ENCODE measurements at regions of chr11 and their contacts with region 1.

Region 1: DNA sequence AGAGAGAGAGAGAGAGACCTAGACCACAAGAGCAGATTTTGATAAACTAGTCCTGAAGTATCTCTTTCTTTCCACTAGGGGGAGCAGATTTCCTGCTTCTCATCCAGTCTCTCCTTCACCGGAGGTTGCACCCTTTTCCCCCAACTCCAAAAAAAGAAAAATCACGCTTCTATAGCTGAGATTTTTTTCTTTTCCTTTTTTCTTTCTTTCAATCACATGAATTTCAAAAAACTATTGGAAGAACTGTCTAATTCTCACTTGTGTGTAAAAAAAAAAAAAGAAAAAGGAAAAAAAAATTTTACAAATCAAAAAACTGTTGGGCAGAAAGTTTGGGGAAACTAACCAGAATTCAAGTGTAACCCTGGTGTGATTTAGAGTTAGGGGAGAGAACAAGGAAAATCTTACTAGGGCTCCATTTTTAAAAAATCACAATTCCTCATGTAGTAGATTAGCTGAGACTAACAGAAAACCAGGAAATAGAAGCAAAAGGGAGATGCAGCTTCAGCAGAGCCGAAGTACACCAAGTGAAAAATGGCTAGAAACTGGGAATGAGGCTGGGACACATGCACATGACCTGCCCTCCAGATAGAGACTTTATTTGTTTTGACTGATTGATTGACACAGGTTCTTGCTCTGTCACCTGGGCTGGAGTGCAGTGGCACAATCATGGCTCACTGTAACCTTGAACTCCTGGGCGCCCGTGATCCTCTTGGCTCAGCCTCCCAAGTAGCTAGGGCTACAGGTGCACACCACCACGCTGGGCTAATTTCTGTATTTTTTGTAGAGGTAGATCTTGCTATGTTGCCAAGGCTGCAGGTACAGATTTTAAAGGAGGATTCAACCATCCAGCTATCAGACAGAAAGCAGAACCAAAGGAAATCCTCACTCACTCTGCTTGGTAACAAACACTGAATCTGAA is 27.1 kb downstream of the SDHD start:
- DNase-seq: peak in 4 of 5 donors; percentile 33 to 56 (median 46)
- H3K4me3 ChIP-seq: no peak overlapping the region
- H3K4me3 Mint-ChIP-seq: no peak overlapping the region
- H3K27ac ChIP-seq: no peak overlapping the region
- H3K27ac Mint-ChIP-seq: peak overlapping the region in 2 of 7 donors; percentile 17 to 57
- H3K4me1 ChIP-seq: no peaks in the 10 kb centered on the region
- H3K4me1 Mint-ChIP-seq: peaks cover 0 to 2% (median 0%) of the 10 kb centered on the region in 4 donors
- H3K27me3 ChIP-seq: no peaks in the 10 kb centered on the region
- H3K27me3 Mint-ChIP-seq: no peaks in the 10 kb centered on the region

Region 2: DNA sequence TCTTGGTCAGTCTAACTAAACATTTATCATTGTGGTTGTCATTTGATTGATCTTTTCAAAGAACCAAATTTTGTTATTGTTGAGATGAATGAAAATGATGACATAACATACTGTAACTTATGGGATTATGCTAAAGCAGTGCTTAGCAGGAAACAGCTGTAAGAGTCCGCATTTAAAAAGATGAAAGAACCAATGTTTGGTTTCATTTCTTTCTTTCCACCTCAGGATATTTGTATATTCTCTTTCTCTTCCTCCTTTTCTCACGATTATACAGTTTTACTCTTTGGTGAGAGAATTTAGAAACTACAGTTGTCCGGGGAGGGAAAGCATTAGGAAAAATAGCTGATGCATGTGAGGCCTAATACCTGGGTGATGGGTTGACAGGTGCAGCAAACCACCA is 63.1 kb before region 1 on chr11:
- CTCF ChIA-PET with region 1: no interaction called
- POLR2A ChIA-PET with region 1: no interaction called
- intact Hi-C with region 1: loop called (anchors 10 kb)
- DNase-seq: no peak
- H3K4me3 ChIP-seq: no peak overlapping the region
- H3K4me3 Mint-ChIP-seq: no peak overlapping the region
- H3K27ac ChIP-seq: no peak overlapping the region
- H3K27ac Mint-ChIP-seq: peak overlapping the region in 1 of 7 donors; percentile 32
- H3K4me1 ChIP-seq: no peaks in the 10 kb centered on the region
- H3K4me1 Mint-ChIP-seq: peaks cover 6 to 10% (median 8%) of the 10 kb centered on the region in 4 donors
- H3K27me3 ChIP-seq: no peaks in the 10 kb centered on the region
- H3K27me3 Mint-ChIP-seq: no peaks in the 10 kb centered on the region

Region 3: DNA sequence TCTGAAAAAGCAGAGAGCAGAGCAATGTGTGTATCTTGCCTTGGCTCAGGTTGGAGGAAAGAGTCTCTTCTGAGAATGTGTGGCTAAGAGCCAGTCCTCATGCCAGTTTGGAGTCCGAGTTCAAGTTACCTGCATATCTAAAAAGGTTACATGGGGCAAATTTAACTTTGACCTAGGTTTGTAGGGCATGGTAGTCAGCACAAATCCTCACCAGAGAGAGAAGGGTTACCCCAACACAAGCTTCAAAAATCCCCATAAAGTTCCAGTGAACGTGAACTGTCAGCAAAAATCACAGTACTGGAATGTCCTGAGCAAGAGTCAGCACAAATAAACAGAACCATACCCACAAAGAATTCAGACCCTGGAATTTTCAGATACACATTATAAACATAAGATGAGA is 13.3 kb before region 1 on chr11:
- CTCF ChIA-PET with region 1: interaction called, 31 read pairs
- POLR2A ChIA-PET with region 1: no interaction called
- intact Hi-C with region 1: no loop called
- DNase-seq: no peak
- H3K4me3 ChIP-seq: no peak overlapping the region
- H3K4me3 Mint-ChIP-seq: no peak overlapping the region
- H3K27ac ChIP-seq: no peak overlapping the region
- H3K27ac Mint-ChIP-seq: peak overlapping the region in 1 of 7 donors; percentile 2
- H3K4me1 ChIP-seq: no peaks in the 10 kb centered on the region
- H3K4me1 Mint-ChIP-seq: peaks cover 0 to 4% (median 3%) of the 10 kb centered on the region in 4 donors
- H3K27me3 ChIP-seq: no peaks in the 10 kb centered on the region
- H3K27me3 Mint-ChIP-seq: no peaks in the 10 kb centered on the region

Region 4: GRCh38 chr11:112174789-112175598 is 61.2 kb after region 1 on chr11 and contains the start of gene BCO2:
- CTCF ChIA-PET with region 1: interaction called, 3 read pairs
- POLR2A ChIA-PET with region 1: no interaction called
- intact Hi-C with region 1: loop called (anchors 2 kb)
- DNase-seq: peak; percentile 8 to 39 (median 26)
- H3K4me3 ChIP-seq: no peak within 1 kb of the TSS
- H3K4me3 Mint-ChIP-seq: peak within 1 kb of the TSS; percentile 18 to 79 (median 60)
- H3K27ac ChIP-seq: no peak within 1 kb of the TSS
- H3K27ac Mint-ChIP-seq: peak within 1 kb of the TSS in 4 of 7 donors; percentile 15 to 59 (median 35)
- H3K4me1 ChIP-seq: peaks cover 9% of the 10 kb centered on the region
- H3K4me1 Mint-ChIP-seq: peaks cover 0 to 12% (median 9%) of the 10 kb centered on the region in 4 donors
- H3K27me3 ChIP-seq: no peaks in the 10 kb centered on the region
- H3K27me3 Mint-ChIP-seq: peaks cover 8 to 14% of the 10 kb centered on the region in 2 donors
- total RNA-seq, gene BCO2: 1.9 to 3.4 TPM

Measured in CD4-positive, alpha-beta memory T cell (primary cell).